BJ (cell line): ENCODE measurements at regions of chr6 and their contacts with region 1.

Region 1: DNA sequence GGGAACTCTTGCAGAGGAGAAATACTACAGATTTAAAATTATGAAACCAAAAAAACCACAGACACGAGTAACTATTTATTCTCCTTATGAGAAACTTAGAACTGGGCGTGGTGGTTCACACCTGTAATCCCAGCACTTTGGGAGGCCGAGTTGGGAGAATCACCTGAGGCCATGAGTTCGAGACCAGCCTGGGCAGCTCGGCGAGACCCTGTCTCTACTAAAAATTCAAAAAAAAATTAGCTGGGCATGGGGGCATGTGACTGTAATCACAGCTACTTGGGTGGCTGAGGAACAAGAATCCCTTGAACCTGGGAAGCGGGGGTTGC is 36.8 kb downstream of the SSR1 start:
- DNase-seq: no peak
- H3K4me3 ChIP-seq: no peak overlapping the region
- H3K27me3 ChIP-seq: no peaks in the 10 kb centered on the region
- CTCF ChIP-seq: no peak

Region 2: DNA sequence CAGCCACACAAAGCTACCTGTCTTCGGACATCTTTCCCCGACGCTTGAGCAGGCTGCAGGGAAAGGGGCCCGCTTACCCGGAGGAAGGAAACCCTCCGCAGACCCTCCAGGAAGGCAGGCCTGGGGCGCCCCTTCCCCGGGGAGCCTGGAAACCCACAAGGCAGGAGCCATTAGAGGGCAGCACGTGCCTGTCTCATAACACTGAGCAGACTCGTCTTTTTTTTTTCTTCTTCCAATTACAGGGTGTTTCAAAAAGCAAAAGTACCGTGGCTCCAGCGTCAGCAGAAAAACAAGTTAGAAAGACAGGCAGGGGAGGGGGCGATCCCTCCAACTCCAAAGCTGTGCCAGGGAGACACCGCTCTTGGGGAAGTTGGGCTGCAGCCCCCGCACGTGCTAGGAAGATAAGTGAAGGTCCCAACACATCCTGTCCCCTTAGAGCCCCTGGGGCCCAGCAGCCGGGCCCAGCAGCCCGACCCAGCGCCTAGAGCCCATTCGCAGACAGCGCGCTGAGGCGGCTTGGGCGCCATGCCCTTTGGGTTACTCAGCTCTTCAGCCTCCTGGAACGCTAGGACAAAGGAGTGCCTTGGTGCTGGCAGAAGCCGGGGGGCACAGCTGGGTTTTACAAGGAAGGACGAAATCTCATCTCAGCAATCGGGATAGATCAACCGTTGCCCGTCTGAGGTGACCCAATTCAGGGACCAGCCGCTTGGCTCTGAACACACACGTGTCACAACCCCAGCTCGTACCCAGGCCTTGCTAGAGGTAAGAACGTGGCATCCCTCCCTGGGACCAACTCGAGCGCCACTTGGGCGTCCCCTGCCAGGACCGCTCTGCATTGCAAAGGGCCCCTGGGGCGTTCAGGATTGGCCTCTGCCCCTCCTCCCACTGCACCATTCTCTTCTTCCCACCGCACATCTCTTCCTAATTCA is 551.4 kb before region 1 on chr6:
- CTCF ChIA-PET with region 1: interaction called, 11 read pairs
- POLR2A ChIA-PET with region 1: no interaction called
- DNase-seq: no peak
- H3K4me3 ChIP-seq: peak overlapping the region; percentile 34
- H3K27me3 ChIP-seq: no peaks in the 10 kb centered on the region
- CTCF ChIP-seq: peak; percentile 64

Region 3: GRCh38 chr6:7264686-7265384 is 11.3 kb before region 1 on chr6:
- CTCF ChIA-PET with region 1: interaction called, 20 read pairs
- POLR2A ChIA-PET with region 1: no interaction called
- DNase-seq: no peak
- H3K4me3 ChIP-seq: no peak overlapping the region
- H3K27me3 ChIP-seq: no peaks in the 10 kb centered on the region
- CTCF ChIP-seq: no peak

Region 4: DNA sequence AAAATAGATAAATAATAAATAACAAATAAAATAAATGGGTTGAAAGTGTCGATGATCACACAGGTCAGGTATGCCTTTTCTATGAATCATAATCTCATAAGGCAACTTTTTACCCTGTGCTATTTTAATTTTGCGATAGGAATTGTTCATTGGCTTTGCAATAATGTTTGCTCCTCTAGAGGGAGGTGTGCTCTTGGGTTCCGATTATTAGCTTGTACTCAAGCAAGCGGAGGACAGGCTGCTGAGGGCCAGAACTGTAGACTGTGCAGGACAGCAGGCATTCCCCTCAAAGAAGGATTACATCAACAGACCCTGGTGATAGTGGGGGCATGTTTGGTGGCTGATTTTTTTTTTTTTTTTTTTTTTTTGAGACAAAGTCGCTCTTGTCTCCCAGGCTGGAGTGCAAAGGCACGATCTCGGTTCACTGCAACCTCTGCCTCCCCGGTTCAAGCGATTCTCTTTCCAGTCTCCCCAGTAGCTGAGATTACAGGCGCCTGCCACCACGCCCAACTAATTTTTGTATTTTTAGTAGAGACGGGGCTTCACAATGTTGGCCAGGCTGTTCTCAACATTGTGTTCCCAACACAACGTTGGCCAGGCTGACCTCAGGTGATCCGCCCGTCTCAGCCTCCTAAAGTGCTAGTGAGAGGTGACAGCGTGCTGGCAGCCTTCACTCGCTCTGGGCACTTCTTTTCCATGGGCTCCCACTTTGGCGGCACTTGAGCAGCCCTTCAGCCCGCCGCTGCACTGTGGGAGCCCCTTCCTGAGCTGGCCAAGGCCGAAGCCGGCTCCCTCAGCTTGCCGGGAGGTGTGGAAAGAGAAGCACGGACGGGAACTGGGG is 149.0 kb after region 1 on chr6:
- CTCF ChIA-PET with region 1: no interaction called
- POLR2A ChIA-PET with region 1: no interaction called
- DNase-seq: no peak
- H3K4me3 ChIP-seq: no peak overlapping the region
- H3K27me3 ChIP-seq: no peaks in the 10 kb centered on the region
- CTCF ChIP-seq: peak; percentile 45

Region 5: GRCh38 chr6:7615611-7616383 is 339.6 kb after region 1 on chr6:
- CTCF ChIA-PET with region 1: interaction called, 34 read pairs
- POLR2A ChIA-PET with region 1: no interaction called
- DNase-seq: no peak
- H3K4me3 ChIP-seq: no peak overlapping the region
- H3K27me3 ChIP-seq: no peaks in the 10 kb centered on the region
- CTCF ChIP-seq: peak; percentile 72